ENCODE measurements at regions of chr11 and their contacts with region 1.

Region 1: GRCh38 chr11:21933095-21933494 is 259.8 kb upstream of the ANO5 start:
- DNase-seq: no peak
- ATAC-seq: no peak

Region 2: DNA sequence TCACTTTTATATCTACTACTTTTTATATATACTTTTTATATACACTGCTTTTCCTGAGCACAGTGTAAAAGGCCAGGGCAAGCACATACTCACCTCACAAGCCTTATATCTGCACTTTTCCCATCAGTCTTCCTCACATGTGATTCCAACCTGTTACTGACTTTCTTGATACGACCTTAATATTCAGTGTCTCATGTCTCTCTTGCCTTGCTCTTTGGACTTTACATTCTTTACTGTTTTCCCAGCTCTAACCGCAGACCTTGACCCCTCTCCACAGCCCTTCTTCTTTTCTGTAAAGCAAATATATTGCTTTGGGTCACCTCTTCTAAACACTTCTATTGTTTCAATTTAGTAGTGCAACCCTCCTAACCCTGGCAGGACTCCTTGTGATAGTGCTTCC is 93.3 kb before region 1 on chr11:
- intact Hi-C with region 1: no loop called
- DNase-seq: no peak
- ATAC-seq: no peak

Region 3: GRCh38 chr11:22130462-22131053 is 197.5 kb after region 1 on chr11:
- intact Hi-C with region 1: loop called (anchors 5 to 10 kb)
- DNase-seq: no peak
- ATAC-seq: no peak

Measured in left cardiac atrium (tissue), 4 donors.